ENCODE measurements at regions of chr6 and their contacts with region 1.

Region 1: GRCh38 chr6:106300944-106301343 is 24.6 kb downstream of the ATG5 start:
- DNase-seq: no peak
- H3K4me3 ChIP-seq: no peak overlapping the region
- H3K27ac ChIP-seq: no peak overlapping the region
- H3K4me1 ChIP-seq: no peaks in the 10 kb centered on the region
- H3K27me3 ChIP-seq: no peaks in the 10 kb centered on the region
- CTCF ChIP-seq: peak; percentile 75

Region 2: GRCh38 chr6:104983281-104983680 is 1317.7 kb before region 1 on chr6:
- CTCF ChIA-PET with region 1: no interaction called
- POLR2A ChIA-PET with region 1: no interaction called
- intact Hi-C with region 1: no loop called
- DNase-seq: no peak
- H3K4me3 ChIP-seq: no peak overlapping the region
- H3K27ac ChIP-seq: no peak overlapping the region
- H3K4me1 ChIP-seq: no peaks in the 10 kb centered on the region
- H3K27me3 ChIP-seq: no peaks in the 10 kb centered on the region
- CTCF ChIP-seq: no peak

Region 3: GRCh38 chr6:105484238-105485161 is 816.4 kb before region 1 on chr6:
- CTCF ChIA-PET with region 1: no interaction called
- POLR2A ChIA-PET with region 1: no interaction called
- intact Hi-C with region 1: loop called (anchors 1 kb)
- DNase-seq: peak in 1 of 2 experiments; percentile 53
- H3K4me3 ChIP-seq: no peak overlapping the region
- H3K27ac ChIP-seq: no peak overlapping the region
- H3K4me1 ChIP-seq: peaks cover 13% of the 10 kb centered on the region
- H3K27me3 ChIP-seq: no peaks in the 10 kb centered on the region
- CTCF ChIP-seq: peak; percentile 97

Region 4: GRCh38 chr6:105557291-105557690 is 743.7 kb before region 1 on chr6:
- CTCF ChIA-PET with region 1: no interaction called
- POLR2A ChIA-PET with region 1: interaction called, 13 read pairs
- intact Hi-C with region 1: no loop called
- DNase-seq: no peak
- H3K4me3 ChIP-seq: no peak overlapping the region
- H3K27ac ChIP-seq: no peak overlapping the region
- H3K4me1 ChIP-seq: peaks cover 13% of the 10 kb centered on the region
- H3K27me3 ChIP-seq: no peaks in the 10 kb centered on the region
- CTCF ChIP-seq: no peak

Region 5: GRCh38 chr6:106097411-106098231 is 203.3 kb before region 1 on chr6:
- CTCF ChIA-PET with region 1: no interaction called
- POLR2A ChIA-PET with region 1: no interaction called
- intact Hi-C with region 1: loop called (anchors 10 kb)
- DNase-seq: no peak
- H3K4me3 ChIP-seq: peak overlapping the region; percentile 60
- H3K27ac ChIP-seq: peak overlapping the region; percentile 50
- H3K4me1 ChIP-seq: peaks cover 40% of the 10 kb centered on the region
- H3K27me3 ChIP-seq: no peaks in the 10 kb centered on the region
- CTCF ChIP-seq: no peak

Measured in PC-9 (cell line).